ENCODE measurements at regions of chr3 and their contacts with region 1.

Region 1: DNA sequence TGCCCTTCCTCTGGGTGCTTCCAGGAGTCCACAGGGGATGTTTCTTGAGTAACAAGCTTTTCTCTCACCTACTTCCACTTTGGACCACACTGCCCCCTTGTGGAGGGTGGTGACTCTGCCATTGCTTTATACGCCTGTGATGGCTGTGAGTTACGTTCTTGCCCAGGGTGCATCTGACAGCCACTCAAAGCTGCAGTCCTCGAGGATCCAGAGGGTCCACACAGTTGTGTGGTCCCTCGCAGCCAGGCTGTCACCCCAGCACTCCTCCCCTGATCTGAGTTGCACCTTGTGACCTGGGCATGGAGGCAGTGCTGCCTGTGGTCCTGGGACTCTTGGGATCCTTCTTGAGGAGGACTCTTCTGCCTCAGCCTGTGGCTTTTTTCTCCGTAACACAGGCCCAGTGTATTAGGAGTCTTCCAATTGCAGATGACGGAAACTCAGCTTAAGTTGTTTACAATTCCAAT is 23.4 kb downstream of the FOXL2 start:
- DNase-seq: peak; percentile 67
- H3K4me3 ChIP-seq: no peak overlapping the region
- H3K27ac ChIP-seq: no peak overlapping the region
- H3K27me3 ChIP-seq: peaks cover 8% of the 10 kb centered on the region
- CTCF ChIP-seq: peak; percentile 96

Region 2: DNA sequence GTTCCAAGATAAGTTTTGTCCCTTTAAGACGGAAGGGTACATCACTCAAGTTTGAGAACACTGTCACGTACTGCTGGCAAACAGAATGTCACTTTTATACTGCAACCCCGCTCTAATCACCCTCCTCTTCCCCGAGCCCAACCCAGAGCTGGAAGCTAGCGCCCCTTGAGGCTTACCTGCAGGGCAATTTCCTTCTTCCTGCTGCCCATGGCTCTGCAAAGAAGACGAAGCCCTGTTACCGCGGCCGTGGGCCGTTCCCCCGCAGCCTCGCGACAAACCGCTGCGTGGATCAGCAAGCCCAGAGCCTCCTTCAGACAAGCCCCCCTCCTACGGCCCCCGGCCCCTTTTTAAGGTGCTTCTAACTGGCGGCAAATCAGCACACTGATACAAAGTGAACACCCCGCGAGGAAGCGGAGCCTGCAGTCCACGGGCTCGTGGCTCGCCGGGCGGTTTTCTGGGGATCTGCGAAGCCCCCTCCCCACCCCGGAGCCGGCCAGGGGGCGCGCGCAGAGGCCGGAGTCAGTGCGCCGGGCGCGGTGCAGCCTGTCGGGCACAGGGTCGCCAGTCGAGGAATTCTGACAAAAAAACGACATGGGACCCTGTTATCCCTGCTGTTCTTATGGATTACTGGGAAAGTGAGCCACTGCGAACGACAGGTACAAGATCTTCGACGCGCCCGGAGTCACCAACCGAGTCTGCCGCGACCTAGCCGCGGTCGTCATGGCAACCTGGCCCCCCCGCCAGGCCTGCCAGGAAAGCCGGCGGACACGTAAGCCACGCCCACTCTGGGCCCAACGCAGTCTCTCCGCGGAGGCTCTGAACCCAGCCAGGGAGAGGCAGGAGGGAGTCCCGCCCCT is 594.2 kb before region 1 on chr3 and contains the start of gene NME9:
- CTCF ChIA-PET with region 1: interaction called, 26 read pairs
- POLR2A ChIA-PET with region 1: no interaction called
- DNase-seq: peak; percentile 55
- H3K4me3 ChIP-seq: peak within 1 kb of the TSS; percentile 68
- H3K27ac ChIP-seq: no peak within 1 kb of the TSS
- H3K27me3 ChIP-seq: peaks cover 5% of the 10 kb centered on the region
- CTCF ChIP-seq: peak; percentile 79
- polyA plus RNA-seq, gene NME9: 0.19 TPM in 1 of 2 replicates, not detected in the other

Region 3: GRCh38 chr3:138468886-138469285 is 454.7 kb before region 1 on chr3:
- CTCF ChIA-PET with region 1: interaction called, 10 read pairs
- POLR2A ChIA-PET with region 1: no interaction called
- DNase-seq: no peak
- H3K4me3 ChIP-seq: no peak overlapping the region
- H3K27ac ChIP-seq: no peak overlapping the region
- H3K27me3 ChIP-seq: peaks cover 16% of the 10 kb centered on the region
- CTCF ChIP-seq: no peak

Region 4: GRCh38 chr3:138600100-138600745 is 323.3 kb before region 1 on chr3:
- CTCF ChIA-PET with region 1: interaction called, 560 read pairs
- POLR2A ChIA-PET with region 1: no interaction called
- DNase-seq: no peak
- H3K4me3 ChIP-seq: no peak overlapping the region
- H3K27ac ChIP-seq: no peak overlapping the region
- H3K27me3 ChIP-seq: no peaks in the 10 kb centered on the region
- CTCF ChIP-seq: no peak

Region 5: GRCh38 chr3:138625707-138626365 is 297.7 kb before region 1 on chr3:
- CTCF ChIA-PET with region 1: interaction called, 10 read pairs
- POLR2A ChIA-PET with region 1: no interaction called
- DNase-seq: peak; percentile 8
- H3K4me3 ChIP-seq: no peak overlapping the region
- H3K27ac ChIP-seq: no peak overlapping the region
- H3K27me3 ChIP-seq: no peaks in the 10 kb centered on the region
- CTCF ChIP-seq: no peak

Region 6: DNA sequence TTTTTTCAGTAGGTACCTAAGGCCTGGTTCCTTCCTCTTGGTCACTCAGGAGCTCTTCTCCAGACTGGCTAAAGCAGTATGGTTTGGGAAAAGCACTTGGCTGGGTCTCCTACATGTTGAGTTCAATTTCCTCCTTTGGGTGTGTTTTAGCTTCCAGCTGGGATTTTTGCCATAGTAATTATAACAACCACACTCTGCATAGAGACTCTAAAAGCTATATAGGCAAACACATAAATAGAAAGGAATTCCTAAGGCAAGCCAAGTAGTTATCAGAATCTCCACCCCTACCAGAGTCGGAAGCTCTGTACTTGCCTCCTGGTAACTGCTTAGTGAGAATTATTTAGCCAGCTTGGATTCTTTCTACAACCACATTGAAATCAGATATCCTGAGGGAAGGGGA is 25.3 kb before region 1 on chr3:
- CTCF ChIA-PET with region 1: interaction called, 14 read pairs
- POLR2A ChIA-PET with region 1: no interaction called
- DNase-seq: no peak
- H3K4me3 ChIP-seq: no peak overlapping the region
- H3K27ac ChIP-seq: no peak overlapping the region
- H3K27me3 ChIP-seq: no peaks in the 10 kb centered on the region
- CTCF ChIP-seq: no peak

Region 7: GRCh38 chr3:138941259-138941885 is 17.8 kb after region 1 on chr3:
- CTCF ChIA-PET with region 1: interaction called, 82 read pairs
- POLR2A ChIA-PET with region 1: interaction called, 4 read pairs
- DNase-seq: peak; percentile 11
- H3K4me3 ChIP-seq: no peak overlapping the region
- H3K27ac ChIP-seq: no peak overlapping the region
- H3K27me3 ChIP-seq: peaks cover 93% of the 10 kb centered on the region
- CTCF ChIP-seq: peak; percentile 70

Region 8: GRCh38 chr3:139044366-139045210 is 121.0 kb after region 1 on chr3 and contains the start of gene PRR23C:
- CTCF ChIA-PET with region 1: no interaction called
- POLR2A ChIA-PET with region 1: no interaction called
- DNase-seq: no peak
- H3K4me3 ChIP-seq: no peak within 1 kb of the TSS
- H3K27ac ChIP-seq: no peak within 1 kb of the TSS
- H3K27me3 ChIP-seq: no peaks in the 10 kb centered on the region
- CTCF ChIP-seq: no peak
- polyA plus RNA-seq, gene PRR23C: not detected in 2 replicates